Heart left ventricle (tissue), 16 donors: ENCODE measurements at regions of chr21 and their contacts with region 1.

Region 1: GRCh38 chr21:32423320-32424190 is 11.0 kb downstream of the EVA1C start:
- DNase-seq: no peak
- ATAC-seq: no peak
- H3K4me3 ChIP-seq: no peak overlapping the region
- H3K27ac ChIP-seq: no peak overlapping the region
- H3K4me1 ChIP-seq: peaks cover 0 to 39% (median 21%) of the 10 kb centered on the region in 12 donors
- H3K27me3 ChIP-seq: no peaks in the 10 kb centered on the region
- CTCF ChIP-seq: no peak
- POLR2A ChIP-seq: no peak

Region 2: DNA sequence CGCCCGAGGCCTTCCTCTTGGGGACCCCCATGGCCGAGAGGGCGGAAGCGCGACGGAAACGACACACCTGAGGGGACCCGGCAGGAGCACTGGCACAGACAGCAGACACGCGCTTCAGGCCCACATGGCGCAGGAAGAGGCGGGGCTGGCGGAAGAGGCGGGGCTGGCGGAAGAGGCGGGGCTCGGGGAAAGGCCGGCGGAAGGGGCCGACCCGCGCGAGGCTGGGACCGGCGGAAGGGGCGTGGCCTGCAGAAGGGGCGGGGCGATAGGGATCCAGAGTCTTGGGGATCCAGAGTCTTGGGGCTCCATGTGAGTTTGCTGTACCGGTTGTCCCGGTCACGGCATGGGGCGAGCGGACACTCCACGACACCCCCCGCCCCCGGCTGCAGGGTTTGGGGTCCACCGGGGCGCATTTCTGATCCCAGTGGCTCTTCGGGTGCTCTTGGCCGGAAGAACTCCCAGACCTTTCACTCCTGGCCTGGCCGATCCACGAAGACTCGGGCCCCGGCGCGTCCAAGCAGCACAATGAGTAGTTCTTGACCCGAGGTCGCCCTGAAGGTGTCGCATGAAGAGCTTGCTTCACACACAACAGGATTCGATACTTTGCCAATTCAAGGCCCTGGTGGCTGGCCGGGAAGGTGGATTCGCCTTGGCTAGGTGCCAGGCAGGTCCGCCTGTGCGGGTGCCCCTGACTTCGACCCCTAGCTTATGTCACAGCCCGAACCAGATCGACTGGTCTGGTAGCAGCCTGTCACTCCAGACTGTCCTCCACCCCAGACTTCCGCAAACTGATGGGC is 30.5 kb before region 1 on chr21 and contains the start of gene URB1:
- intact Hi-C with region 1: no loop called
- DNase-seq: peak; percentile 94 to 96 (median 94)
- ATAC-seq: peak; percentile 95 to 99 (median 98)
- H3K4me3 ChIP-seq: peak within 1 kb of the TSS; percentile 79 to 99 (median 82)
- H3K27ac ChIP-seq: peak within 1 kb of the TSS; percentile 80 to 96 (median 90)
- H3K4me1 ChIP-seq: peaks cover 2 to 38% (median 21%) of the 10 kb centered on the region in 12 donors
- H3K27me3 ChIP-seq: no peaks in the 10 kb centered on the region
- CTCF ChIP-seq: no peak
- POLR2A ChIP-seq: peak in 1 of 2 donors; percentile 83
- total RNA-seq, gene URB1: 6.7 to 26.0 (median 11.5) TPM

Region 3: GRCh38 chr21:32457360-32457840 is 33.8 kb after region 1 on chr21:
- intact Hi-C with region 1: loop called in 2 of 10 experiments (anchors 5 to 10 kb)
- DNase-seq: peak; percentile 41 to 71 (median 52)
- ATAC-seq: peak in 3 of 4 donors; percentile 40 to 52 (median 45)
- H3K4me3 ChIP-seq: no peak overlapping the region
- H3K27ac ChIP-seq: peak overlapping the region; percentile 11 to 78 (median 60)
- H3K4me1 ChIP-seq: peaks cover 9 to 36% (median 20%) of the 10 kb centered on the region in 12 donors
- H3K27me3 ChIP-seq: no peaks in the 10 kb centered on the region
- CTCF ChIP-seq: peak in 6 of 12 donors; percentile 11 to 38 (median 15)
- POLR2A ChIP-seq: no peak